Colonic mucosa (tissue), 4 donors: ENCODE measurements at regions of chr1 and their contacts with region 1.

Region 1: DNA sequence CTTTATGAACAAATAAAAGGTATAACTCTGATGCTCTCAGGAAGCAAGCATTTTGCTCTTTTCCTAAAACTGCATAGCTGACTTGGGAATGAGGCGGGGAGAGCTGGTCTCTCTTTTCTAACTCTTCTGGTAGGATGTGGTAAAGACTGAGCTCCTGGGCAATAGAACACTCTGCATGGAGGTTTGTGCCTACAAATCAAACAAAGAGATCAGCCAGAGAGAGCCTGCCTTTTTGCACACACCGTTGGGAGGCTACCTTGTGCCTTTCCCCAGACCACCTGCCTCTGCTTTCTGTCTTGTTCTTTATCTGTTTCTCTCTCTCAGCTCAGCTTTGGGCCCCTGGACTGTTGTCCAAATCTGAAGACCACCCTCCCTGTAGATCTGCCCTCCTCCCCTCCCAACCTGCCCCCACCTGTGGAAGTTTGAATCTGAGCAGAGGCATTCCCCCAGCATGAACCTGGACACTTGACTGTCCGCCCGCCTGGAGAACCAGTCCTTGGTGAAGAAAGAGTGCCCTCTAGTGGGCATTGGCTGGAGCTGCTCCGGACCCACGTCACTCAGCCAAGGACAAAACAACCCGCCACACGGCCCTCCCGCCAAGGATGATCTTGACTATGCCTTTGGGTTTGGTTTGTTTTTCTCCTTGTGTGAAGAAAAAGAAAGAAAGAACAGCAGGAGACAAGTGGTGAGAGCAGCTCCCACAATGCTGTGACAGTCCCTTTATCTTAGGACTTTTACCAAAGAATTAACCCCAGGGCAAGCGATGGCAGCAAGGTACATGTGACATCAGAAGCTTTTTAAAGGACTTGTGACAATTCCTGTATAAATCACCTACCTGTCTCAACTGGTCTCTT is 228.2 kb downstream of the PBX1 start:
- DNase-seq: peak; percentile 85
- H3K4me3 ChIP-seq: no peak overlapping the region
- H3K27ac ChIP-seq: no peak overlapping the region
- H3K4me1 ChIP-seq: peaks cover 5% of the 10 kb centered on the region
- H3K27me3 ChIP-seq: no peaks in the 10 kb centered on the region
- CTCF ChIP-seq: peak; percentile 90

Region 2: GRCh38 chr1:164163289-164163864 is 623.8 kb before region 1 on chr1:
- intact Hi-C with region 1: loop called (anchors 5 kb)
- DNase-seq: no peak
- H3K4me3 ChIP-seq: no peak overlapping the region
- H3K27ac ChIP-seq: no peak overlapping the region
- H3K4me1 ChIP-seq: no peaks in the 10 kb centered on the region
- H3K27me3 ChIP-seq: no peaks in the 10 kb centered on the region
- CTCF ChIP-seq: no peak

Region 3: DNA sequence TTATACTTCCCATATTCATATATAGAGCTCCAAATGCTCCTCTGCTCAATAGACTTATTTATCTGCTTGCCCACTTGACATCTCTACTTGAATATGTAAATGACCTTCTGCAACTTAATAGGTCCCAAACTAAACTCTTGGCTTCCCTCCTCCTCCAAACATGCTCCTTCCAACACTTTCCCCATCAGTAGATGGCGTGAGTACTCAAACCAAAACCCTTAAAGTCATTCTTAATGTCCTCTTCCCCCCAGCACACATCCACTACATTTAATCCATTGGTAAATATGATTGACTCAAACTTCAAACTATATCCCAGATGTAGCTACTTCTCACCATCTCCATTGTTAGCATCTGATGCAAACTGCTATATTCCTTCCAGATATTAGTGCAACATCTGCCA is 276.8 kb before region 1 on chr1:
- intact Hi-C with region 1: loop called (anchors 10 kb)
- DNase-seq: no peak
- H3K4me3 ChIP-seq: no peak overlapping the region
- H3K27ac ChIP-seq: no peak overlapping the region
- H3K4me1 ChIP-seq: no peaks in the 10 kb centered on the region
- H3K27me3 ChIP-seq: no peaks in the 10 kb centered on the region
- CTCF ChIP-seq: no peak

Region 4: DNA sequence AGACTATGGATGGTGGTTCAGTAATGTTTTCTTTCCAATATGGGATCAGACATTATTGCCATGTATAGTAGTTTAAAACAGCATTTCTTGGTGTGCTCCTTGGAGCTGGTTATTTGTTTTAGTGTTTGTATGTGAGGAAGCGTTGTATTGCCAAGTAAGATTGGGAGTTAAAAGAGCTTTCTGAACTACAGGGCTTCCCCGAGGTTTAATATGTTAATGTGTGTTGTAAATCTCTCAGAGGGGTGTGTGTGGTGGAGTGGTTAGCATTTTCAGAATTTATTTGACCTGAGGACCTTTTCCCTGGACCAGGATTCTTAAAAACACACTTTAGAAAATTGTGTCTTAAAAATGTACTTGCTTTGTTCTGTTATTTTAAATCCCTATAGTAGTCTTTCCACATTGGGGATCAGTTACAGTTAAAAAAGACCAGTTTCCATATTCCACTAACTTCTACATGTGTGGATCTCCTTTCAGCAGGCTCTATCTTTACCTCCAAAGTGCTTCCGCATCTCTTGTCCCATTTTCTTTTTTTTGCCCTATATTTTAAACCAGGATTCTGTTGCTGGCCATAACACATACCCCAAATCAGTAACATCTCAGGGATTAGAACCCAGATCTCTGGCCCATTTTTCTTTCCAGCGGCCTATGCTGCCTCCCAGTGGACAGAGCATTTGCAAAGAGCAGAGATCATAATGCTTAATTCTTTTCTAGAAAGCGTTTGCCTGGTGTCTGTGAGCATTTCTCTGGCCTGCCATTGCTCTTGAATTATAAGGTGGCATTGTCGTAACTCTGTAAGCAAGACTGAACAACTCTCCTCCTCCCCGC is 169.6 kb before region 1 on chr1:
- intact Hi-C with region 1: loop called (anchors 5 kb)
- DNase-seq: peak; percentile 70
- H3K4me3 ChIP-seq: no peak overlapping the region
- H3K27ac ChIP-seq: no peak overlapping the region
- H3K4me1 ChIP-seq: peaks cover 10% of the 10 kb centered on the region
- H3K27me3 ChIP-seq: no peaks in the 10 kb centered on the region
- CTCF ChIP-seq: peak; percentile 46

Region 5: DNA sequence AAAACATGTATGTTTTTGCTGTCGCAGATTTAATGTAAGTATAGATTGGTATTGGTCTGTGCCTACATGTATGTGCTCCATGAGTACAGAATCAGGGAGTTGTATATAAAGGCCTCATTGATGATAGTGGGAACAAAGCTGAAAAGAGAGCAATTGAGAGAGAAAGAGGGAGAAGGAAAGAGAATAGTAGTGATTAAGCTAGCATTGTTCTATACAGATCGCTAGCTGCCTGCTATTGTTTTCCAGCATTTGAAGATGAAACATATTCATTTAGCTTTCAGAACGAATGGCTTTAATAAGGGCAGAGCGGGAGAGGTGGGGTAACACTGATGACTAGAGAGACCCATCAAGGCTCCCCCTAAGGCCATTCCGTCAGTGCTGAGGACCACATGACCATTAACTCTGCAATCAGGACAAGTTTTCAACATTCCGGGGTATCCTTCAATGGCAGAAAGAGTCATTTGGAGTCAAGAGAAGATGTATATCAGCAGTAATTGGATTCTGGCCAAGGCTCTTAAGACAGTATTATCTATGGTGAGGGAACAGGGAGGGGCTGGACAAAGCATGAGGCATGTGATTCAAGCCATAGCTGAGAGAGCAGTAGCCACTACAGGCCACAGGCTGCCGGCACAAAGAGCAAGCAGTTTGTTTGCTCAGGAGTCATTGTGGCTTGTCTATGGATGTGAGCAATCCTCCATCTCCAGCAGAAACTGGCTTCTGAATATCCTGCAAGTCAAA is 51.7 kb before region 1 on chr1:
- intact Hi-C with region 1: no loop called
- DNase-seq: no peak
- H3K4me3 ChIP-seq: no peak overlapping the region
- H3K27ac ChIP-seq: no peak overlapping the region
- H3K4me1 ChIP-seq: no peaks in the 10 kb centered on the region
- H3K27me3 ChIP-seq: no peaks in the 10 kb centered on the region
- CTCF ChIP-seq: no peak

Region 6: DNA sequence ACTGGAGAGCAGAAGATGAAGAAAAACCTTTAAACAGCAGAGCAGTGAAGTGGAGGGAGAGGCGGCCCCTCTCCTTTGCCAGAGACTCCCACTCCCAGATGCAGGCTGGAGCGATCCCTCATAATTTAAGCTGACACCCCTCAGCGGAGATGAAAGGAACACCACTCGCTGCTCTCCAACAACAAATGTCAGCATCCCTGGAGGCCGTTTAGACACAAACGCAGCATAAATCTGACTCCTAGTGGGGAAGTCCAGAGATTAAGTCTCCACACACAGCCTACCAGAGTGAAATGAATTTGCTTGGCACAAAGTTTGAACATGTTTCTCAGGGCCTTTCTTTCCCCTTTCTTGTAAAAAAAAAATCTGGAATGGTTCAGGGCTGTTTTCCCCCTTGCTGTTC is 431.5 kb after region 1 on chr1:
- intact Hi-C with region 1: no loop called
- DNase-seq: no peak
- H3K4me3 ChIP-seq: no peak overlapping the region
- H3K27ac ChIP-seq: no peak overlapping the region
- H3K4me1 ChIP-seq: no peaks in the 10 kb centered on the region
- H3K27me3 ChIP-seq: no peaks in the 10 kb centered on the region
- CTCF ChIP-seq: no peak